ENCODE measurements at regions of chr17 and their contacts with region 1.

Region 1: GRCh38 chr17:41548844-41549595 is 20.9 kb upstream of the KRT19 start:
- DNase-seq: peak; percentile 83
- ATAC-seq: peak; percentile 79
- H3K4me3 ChIP-seq: peak overlapping the region; percentile 6 to 46; a peak in 3 of 4 replicates
- H3K27ac ChIP-seq: peak overlapping the region; percentile 91
- H3K4me1 ChIP-seq: peaks cover 39 to 79% of the 10 kb centered on the region in 2 experiments
- H3K27me3 ChIP-seq: no peaks in the 10 kb centered on the region
- CTCF ChIP-seq: peak; percentile 86 to 98 (median 88)
- POLR2A ChIP-seq: no peak
- RAD21 ChIP-seq: peak; percentile 95

Region 2: GRCh38 chr17:40588552-40588951 is 960.5 kb before region 1 on chr17:
- CTCF ChIA-PET with region 1: no interaction called
- POLR2A ChIA-PET with region 1: no interaction called
- RAD21 ChIA-PET with region 1: no interaction called
- intact Hi-C with region 1: no loop called
- DNase-seq: no peak
- ATAC-seq: no peak
- H3K4me3 ChIP-seq: no peak overlapping the region
- H3K27ac ChIP-seq: no peak overlapping the region
- H3K4me1 ChIP-seq: no peaks in the 10 kb centered on the region
- H3K27me3 ChIP-seq: no peaks in the 10 kb centered on the region
- CTCF ChIP-seq: no peak
- POLR2A ChIP-seq: no peak
- RAD21 ChIP-seq: no peak

Region 3: DNA sequence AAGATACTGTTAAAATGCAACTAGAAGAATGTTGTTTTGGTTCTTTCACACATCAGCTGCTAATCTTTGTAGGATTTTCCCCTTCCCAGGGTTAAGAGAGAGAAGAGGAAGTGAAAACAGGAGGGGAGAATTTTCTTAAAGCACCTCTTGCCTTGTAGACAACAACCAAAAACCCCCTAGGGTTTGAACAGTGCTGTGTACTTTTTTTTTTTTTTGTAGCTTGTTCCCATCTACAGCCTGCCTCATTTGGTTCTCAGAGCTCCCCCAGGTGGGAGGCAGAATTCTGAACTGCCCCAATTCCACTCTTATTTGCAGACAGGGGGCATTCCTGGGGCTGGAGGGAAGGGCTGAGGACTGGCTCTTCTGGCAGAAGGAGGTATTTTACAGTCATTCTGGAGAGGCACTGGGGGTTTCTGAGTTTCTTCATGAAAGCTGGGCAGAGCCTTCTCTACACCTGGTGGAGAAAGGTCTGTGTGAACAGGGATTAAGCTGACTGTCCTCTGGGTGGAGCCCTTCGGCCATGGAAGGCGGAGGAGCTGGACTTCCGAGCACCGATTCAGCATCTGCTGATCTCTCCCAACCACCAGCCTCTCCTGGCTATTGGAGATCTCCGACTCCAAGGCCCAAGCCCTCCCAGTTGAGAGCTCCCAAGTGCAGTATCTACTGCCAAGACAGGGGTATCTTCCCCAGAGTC is 933.6 kb before region 1 on chr17:
- CTCF ChIA-PET with region 1: interaction called, 15 read pairs
- POLR2A ChIA-PET with region 1: no interaction called
- RAD21 ChIA-PET with region 1: no interaction called
- intact Hi-C with region 1: loop called (anchors 10 kb)
- DNase-seq: peak; percentile 69
- ATAC-seq: peak; percentile 90
- H3K4me3 ChIP-seq: no peak overlapping the region
- H3K27ac ChIP-seq: no peak overlapping the region
- H3K4me1 ChIP-seq: peaks cover 1 to 17% of the 10 kb centered on the region in 2 experiments; a peak in 3 of 4 replicates
- H3K27me3 ChIP-seq: no peaks in the 10 kb centered on the region
- CTCF ChIP-seq: peak; percentile 72 to 95 (median 75)
- POLR2A ChIP-seq: no peak
- RAD21 ChIP-seq: peak; percentile 87

Region 4: GRCh38 chr17:40909351-40909750 is 639.7 kb before region 1 on chr17:
- CTCF ChIA-PET with region 1: interaction called, 20 read pairs
- POLR2A ChIA-PET with region 1: no interaction called
- RAD21 ChIA-PET with region 1: interaction called in 1 of 2 experiments, 4 read pairs
- intact Hi-C with region 1: loop called (anchors 1 kb)
- DNase-seq: peak; percentile 95
- ATAC-seq: peak; percentile 88
- H3K4me3 ChIP-seq: no peak overlapping the region
- H3K27ac ChIP-seq: peak overlapping the region; percentile 77
- H3K4me1 ChIP-seq: peaks cover 57 to 69% of the 10 kb centered on the region in 2 experiments
- H3K27me3 ChIP-seq: no peaks in the 10 kb centered on the region
- CTCF ChIP-seq: peak; percentile 76 to 88 (median 81)
- POLR2A ChIP-seq: no peak
- RAD21 ChIP-seq: peak; percentile 99

Region 5: GRCh38 chr17:41417576-41418015 is 131.4 kb before region 1 on chr17:
- CTCF ChIA-PET with region 1: interaction called, 15 read pairs
- POLR2A ChIA-PET with region 1: no interaction called
- RAD21 ChIA-PET with region 1: no interaction called
- intact Hi-C with region 1: no loop called
- DNase-seq: no peak
- ATAC-seq: peak; percentile 96
- H3K4me3 ChIP-seq: no peak overlapping the region
- H3K27ac ChIP-seq: no peak overlapping the region
- H3K4me1 ChIP-seq: peaks cover 15 to 44% of the 10 kb centered on the region in 2 experiments
- H3K27me3 ChIP-seq: no peaks in the 10 kb centered on the region
- CTCF ChIP-seq: peak; percentile 45 to 81 (median 73); a peak in 5 of 6 replicates
- POLR2A ChIP-seq: no peak
- RAD21 ChIP-seq: peak; percentile 62

Region 6: DNA sequence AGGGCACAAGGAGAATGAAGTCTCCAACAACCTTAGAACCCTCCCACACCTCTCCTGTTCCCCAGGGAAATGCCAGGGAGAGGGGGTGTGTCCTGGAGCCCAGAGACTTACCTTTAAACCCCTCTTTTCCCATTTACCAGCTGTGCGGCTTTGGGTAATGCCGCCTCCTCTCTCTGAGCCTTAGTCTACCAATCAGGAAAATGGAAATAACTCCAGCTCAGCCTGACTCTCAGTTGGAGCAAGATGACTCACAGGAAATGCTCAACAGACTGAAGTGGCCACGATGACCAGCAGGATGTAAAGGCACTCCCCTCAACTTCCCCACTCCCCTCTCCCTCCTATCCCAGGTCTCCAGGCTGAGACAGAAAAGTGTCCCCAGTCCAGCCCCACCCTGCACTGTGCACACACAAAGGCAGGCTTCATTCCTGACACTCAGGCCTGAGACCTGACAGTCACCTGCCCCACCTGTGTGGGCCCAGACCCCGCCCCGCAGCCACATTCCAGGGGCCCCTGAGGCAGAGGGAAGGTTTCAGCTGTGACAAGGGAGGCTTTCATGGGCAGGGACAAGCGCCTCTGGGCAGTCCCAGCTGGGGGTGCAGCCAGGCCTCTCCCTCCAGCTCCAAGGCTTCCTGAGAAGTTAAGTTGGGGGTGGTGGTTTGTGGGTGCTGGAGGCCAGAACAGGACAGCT is 27.3 kb before region 1 on chr17:
- CTCF ChIA-PET with region 1: interaction called, 77 read pairs
- POLR2A ChIA-PET with region 1: interaction called, 148 read pairs
- RAD21 ChIA-PET with region 1: interaction called, 9 to 19 read pairs
- intact Hi-C with region 1: loop called (anchors 1 kb)
- DNase-seq: peak; percentile 97
- ATAC-seq: peak; percentile 65
- H3K4me3 ChIP-seq: peak overlapping the region; percentile 36 to 47
- H3K27ac ChIP-seq: peak overlapping the region; percentile 99
- H3K4me1 ChIP-seq: peaks cover 74 to 91% of the 10 kb centered on the region in 2 experiments
- H3K27me3 ChIP-seq: no peaks in the 10 kb centered on the region
- CTCF ChIP-seq: no peak; a peak in 1 of 6 replicates
- POLR2A ChIP-seq: no peak
- RAD21 ChIP-seq: no peak

Region 7: DNA sequence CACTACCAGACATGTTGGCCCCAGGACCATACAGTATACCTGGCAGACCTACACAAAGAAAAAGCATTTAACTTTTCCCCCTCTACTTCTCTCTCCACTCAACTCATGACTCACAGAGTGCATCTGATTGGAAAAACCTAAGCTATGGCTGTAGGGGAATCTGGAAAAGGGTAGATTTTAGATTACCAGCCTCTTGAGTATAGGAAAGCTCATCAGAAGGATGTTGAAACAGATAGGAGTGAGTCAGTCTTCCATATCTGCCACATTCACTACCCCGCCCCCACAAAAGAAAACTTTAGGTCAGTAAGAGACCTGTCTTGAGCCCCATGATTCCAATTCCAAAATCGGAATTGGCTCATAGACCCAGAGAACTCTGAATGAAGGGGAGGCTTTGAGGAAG is 10.5 kb after region 1 on chr17:
- CTCF ChIA-PET with region 1: interaction called, 51 read pairs
- POLR2A ChIA-PET with region 1: interaction called, 3 read pairs
- RAD21 ChIA-PET with region 1: no interaction called
- intact Hi-C with region 1: no loop called
- DNase-seq: no peak
- ATAC-seq: no peak
- H3K4me3 ChIP-seq: no peak overlapping the region
- H3K27ac ChIP-seq: no peak overlapping the region
- H3K4me1 ChIP-seq: peaks cover 0 to 13% of the 10 kb centered on the region in 2 experiments; a peak in 2 of 4 replicates
- H3K27me3 ChIP-seq: no peaks in the 10 kb centered on the region
- CTCF ChIP-seq: no peak
- POLR2A ChIP-seq: no peak
- RAD21 ChIP-seq: no peak

Region 8: GRCh38 chr17:41648411-41649195 is 99.6 kb after region 1 on chr17:
- CTCF ChIA-PET with region 1: interaction called, 142 read pairs
- POLR2A ChIA-PET with region 1: interaction called, 25 read pairs
- RAD21 ChIA-PET with region 1: interaction called, 17 to 25 read pairs
- intact Hi-C with region 1: loop called (anchors 1 kb)
- DNase-seq: peak; percentile 77
- ATAC-seq: peak; percentile 81
- H3K4me3 ChIP-seq: peak overlapping the region; percentile 38 to 53
- H3K27ac ChIP-seq: peak overlapping the region; percentile 41
- H3K4me1 ChIP-seq: peaks cover 30 to 77% of the 10 kb centered on the region in 2 experiments
- H3K27me3 ChIP-seq: no peaks in the 10 kb centered on the region
- CTCF ChIP-seq: peak; percentile 90 to 98 (median 95)
- POLR2A ChIP-seq: no peak
- RAD21 ChIP-seq: peak; percentile 92

Measured in HCT116 (cell line).